Stomach (tissue), 19 donors: ENCODE measurements at regions of chr18 and their contacts with region 1.

Region 1: DNA sequence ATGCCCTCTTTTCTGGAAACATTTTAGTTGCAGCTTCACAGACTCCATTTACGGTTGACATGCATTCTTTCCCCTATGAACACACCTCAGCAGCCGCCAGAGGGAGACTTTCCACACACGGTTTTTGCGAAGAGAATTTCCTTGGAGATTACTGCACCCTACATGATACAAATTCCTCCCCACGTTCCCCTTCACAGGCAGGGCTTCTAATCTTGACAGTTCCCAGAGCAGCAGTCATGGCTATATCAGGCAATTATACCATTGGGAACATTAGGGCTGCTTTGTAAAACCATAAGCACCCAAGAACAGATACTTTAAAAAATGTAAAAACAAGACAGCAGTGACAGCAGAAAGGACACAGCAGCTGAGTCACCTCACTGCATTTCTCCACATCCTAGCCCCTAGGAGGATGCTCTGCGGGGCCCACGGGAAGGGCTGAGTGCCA is 253.8 kb downstream of the TGIF1 start:
- DNase-seq: peak; percentile 76 to 86
- H3K4me3 ChIP-seq: no peak overlapping the region
- H3K27ac ChIP-seq: no peak overlapping the region
- H3K4me1 ChIP-seq: peaks cover 6 to 24% (median 15%) of the 10 kb centered on the region in 4 donors
- H3K27me3 ChIP-seq: no peaks in the 10 kb centered on the region
- CTCF ChIP-seq: peak in 5 of 7 experiments; percentile 44 to 85 (median 68)
- EP300 ChIP-seq: no peak
- POLR2A ChIP-seq: no peak

Region 2: DNA sequence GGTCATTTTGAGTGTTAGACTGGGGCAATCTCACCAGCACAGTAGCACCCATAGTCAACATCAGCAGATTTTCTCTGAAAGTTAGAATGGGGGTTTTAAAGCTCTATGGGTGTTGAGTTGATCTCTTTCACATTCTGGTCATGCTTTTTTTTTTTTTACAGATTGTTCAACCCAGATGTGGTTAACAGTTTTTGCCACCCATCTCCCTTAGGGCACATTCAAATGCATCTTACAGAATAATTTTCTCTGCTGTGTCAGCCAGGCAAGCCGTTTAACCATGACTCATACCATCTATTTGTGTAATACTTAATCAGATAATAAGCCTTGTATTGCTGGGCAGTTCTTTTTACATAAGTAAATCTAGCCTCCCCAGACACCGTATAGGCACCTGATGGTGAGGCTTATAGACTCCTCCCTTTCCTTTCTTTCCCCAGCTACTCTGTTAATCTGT is 191.8 kb before region 1 on chr18:
- intact Hi-C with region 1: no loop called
- DNase-seq: peak in 1 of 2 donors; percentile 58
- H3K4me3 ChIP-seq: no peak overlapping the region
- H3K27ac ChIP-seq: no peak overlapping the region
- H3K4me1 ChIP-seq: peaks cover 0 to 11% (median 7%) of the 10 kb centered on the region in 4 donors
- H3K27me3 ChIP-seq: no peaks in the 10 kb centered on the region
- CTCF ChIP-seq: no peak
- EP300 ChIP-seq: no peak
- POLR2A ChIP-seq: no peak

Region 3: GRCh38 chr18:3554091-3554601 is 149.6 kb before region 1 on chr18:
- intact Hi-C with region 1: no loop called
- DNase-seq: no peak
- H3K4me3 ChIP-seq: no peak overlapping the region
- H3K27ac ChIP-seq: no peak overlapping the region
- H3K4me1 ChIP-seq: no peaks in the 10 kb centered on the region
- H3K27me3 ChIP-seq: no peaks in the 10 kb centered on the region
- CTCF ChIP-seq: no peak
- EP300 ChIP-seq: no peak
- POLR2A ChIP-seq: no peak

Region 4: GRCh38 chr18:3645384-3646156 is 58.2 kb before region 1 on chr18:
- intact Hi-C with region 1: no loop called
- DNase-seq: no peak
- H3K4me3 ChIP-seq: no peak overlapping the region
- H3K27ac ChIP-seq: no peak overlapping the region
- H3K4me1 ChIP-seq: peaks cover 0 to 7% (median 0%) of the 10 kb centered on the region in 4 donors
- H3K27me3 ChIP-seq: no peaks in the 10 kb centered on the region
- CTCF ChIP-seq: no peak
- EP300 ChIP-seq: no peak
- POLR2A ChIP-seq: no peak

Region 5: GRCh38 chr18:3760741-3761140 is 57.0 kb after region 1 on chr18:
- intact Hi-C with region 1: loop called (anchors 10 kb)
- DNase-seq: no peak
- H3K4me3 ChIP-seq: no peak overlapping the region
- H3K27ac ChIP-seq: no peak overlapping the region
- H3K4me1 ChIP-seq: no peaks in the 10 kb centered on the region
- H3K27me3 ChIP-seq: no peaks in the 10 kb centered on the region
- CTCF ChIP-seq: no peak
- EP300 ChIP-seq: no peak
- POLR2A ChIP-seq: no peak

Region 6: DNA sequence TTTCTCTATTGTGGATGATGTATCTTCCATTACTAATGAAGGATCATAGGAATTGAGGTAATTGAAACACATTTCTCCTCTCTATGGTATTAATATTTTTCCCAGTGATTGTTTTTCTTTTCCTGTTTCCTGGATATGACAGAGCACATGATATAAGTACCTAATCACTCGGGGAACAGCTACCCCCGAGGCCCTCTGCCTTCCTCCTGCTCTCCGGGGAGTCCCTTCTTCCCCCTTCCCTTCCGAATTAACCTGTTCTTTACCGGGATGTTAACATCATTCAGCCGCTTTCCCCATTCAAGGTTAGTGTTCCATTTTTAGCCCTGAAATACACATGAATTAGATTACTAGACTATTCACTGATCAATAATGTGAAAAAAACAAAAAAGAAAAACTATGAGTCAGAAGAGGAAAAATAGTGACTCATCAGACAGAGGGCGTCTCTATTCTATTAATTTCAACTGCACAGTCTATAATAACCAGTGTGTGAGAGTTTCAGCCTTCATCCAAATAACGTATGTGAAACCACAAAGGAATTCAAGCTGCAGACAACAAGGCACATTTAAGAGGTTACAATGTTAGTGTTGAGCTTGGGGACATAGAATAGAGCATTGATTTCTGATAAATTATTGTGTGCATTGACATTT is 300.6 kb after region 1 on chr18:
- intact Hi-C with region 1: loop called (anchors 10 kb)
- DNase-seq: no peak
- H3K4me3 ChIP-seq: no peak overlapping the region
- H3K27ac ChIP-seq: no peak overlapping the region
- H3K4me1 ChIP-seq: peaks cover 0 to 12% (median 0%) of the 10 kb centered on the region in 4 donors
- H3K27me3 ChIP-seq: no peaks in the 10 kb centered on the region
- CTCF ChIP-seq: no peak
- EP300 ChIP-seq: no peak
- POLR2A ChIP-seq: no peak